PC-3 (cell line): ENCODE measurements at regions of chr12 and their contacts with region 1.

Region 1: GRCh38 chr12:31618228-31619025 is 27.5 kb upstream of the DENND5B start:
- DNase-seq: no peak
- ATAC-seq: no peak
- H3K4me3 ChIP-seq: no peak overlapping the region
- H3K27ac ChIP-seq: no peak overlapping the region
- H3K4me1 ChIP-seq: no peaks in the 10 kb centered on the region
- H3K27me3 ChIP-seq: no peaks in the 10 kb centered on the region
- CTCF ChIP-seq: no peak

Region 2: DNA sequence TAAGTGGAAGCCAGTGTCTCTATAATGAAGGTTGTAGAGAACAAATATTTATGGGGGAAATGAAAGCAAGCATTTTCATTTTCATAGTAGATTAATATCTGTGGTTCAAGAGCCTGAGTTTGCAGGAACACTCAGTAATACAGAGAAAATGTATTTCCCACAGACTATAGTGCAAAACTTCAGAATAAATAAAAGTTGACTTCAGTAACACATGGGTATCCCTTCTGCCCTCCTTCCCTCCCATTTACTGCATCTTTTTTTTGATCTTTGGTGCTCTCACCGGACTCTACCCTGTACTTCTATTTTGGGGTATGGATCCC is 185.7 kb after region 1 on chr12:
- CTCF ChIA-PET with region 1: no interaction called
- POLR2A ChIA-PET with region 1: no interaction called
- intact Hi-C with region 1: no loop called
- DNase-seq: no peak
- ATAC-seq: no peak
- H3K4me3 ChIP-seq: no peak overlapping the region
- H3K27ac ChIP-seq: no peak overlapping the region
- H3K4me1 ChIP-seq: no peaks in the 10 kb centered on the region
- H3K27me3 ChIP-seq: no peaks in the 10 kb centered on the region
- CTCF ChIP-seq: no peak

Region 3: DNA sequence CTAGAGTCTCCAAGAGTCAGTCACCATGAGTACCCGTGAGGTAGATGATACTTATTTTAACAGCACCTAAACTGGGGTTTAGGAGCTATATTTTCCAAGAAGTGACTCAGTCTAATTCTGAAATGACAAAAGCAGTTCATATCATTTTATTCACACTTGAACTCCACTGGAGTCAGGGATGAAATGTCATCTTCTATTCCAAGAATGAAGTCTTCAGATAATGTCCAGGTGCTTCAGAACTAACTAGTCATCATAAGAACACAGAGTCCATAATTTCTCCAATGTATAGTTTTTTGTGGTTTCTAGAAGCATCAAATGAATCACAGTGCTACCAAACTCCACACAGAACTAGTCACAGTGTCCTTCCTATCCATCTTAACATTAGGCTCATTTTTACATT is 1073.9 kb after region 1 on chr12:
- CTCF ChIA-PET with region 1: no interaction called
- POLR2A ChIA-PET with region 1: interaction called, 23 read pairs
- intact Hi-C with region 1: no loop called
- DNase-seq: no peak
- ATAC-seq: no peak
- H3K4me3 ChIP-seq: no peak overlapping the region
- H3K27ac ChIP-seq: no peak overlapping the region
- H3K4me1 ChIP-seq: no peaks in the 10 kb centered on the region
- H3K27me3 ChIP-seq: no peaks in the 10 kb centered on the region
- CTCF ChIP-seq: no peak